ENCODE measurements at regions of chr5 and their contacts with region 1.

Region 1: DNA sequence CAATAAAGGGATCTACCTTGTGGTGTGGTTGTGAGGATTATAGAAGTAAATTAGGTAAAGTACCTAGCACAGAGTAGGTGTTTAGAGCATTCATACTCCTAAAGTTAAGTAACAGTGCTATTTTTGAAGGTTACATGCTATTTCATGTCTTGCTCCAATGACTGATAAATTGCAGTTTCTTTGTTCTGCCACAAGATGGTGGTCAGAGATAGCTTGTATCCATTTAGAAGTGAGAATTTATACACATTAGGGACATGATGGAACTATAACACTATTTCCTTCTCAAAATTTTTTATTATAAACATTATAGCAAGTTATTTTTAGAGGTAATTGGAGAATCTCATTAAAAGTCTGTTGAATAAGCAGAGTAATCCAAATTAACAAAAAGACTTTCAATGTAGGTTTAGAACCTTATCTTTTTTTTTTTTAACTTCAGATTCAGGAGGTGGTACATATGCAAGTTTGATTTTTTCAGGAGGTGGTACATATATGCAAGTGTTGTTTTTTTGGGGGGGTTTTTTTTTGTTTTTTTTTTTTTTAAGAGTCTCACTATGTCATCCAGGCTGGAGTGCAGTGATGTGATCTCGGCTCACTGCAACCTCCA is 17.1 kb downstream of the MTREX start:
- DNase-seq: peak in 6 of 9 donors; percentile 8 to 54 (median 36)
- ATAC-seq: peak; percentile 77
- H3K4me3 ChIP-seq: no peak overlapping the region
- H3K4me3 Mint-ChIP-seq: no peak overlapping the region
- H3K27ac ChIP-seq: no peak overlapping the region
- H3K27ac Mint-ChIP-seq: peak overlapping the region in 2 of 9 donors; percentile 4 to 34
- H3K4me1 ChIP-seq: peaks cover 0 to 3% of the 10 kb centered on the region in 2 donors
- H3K4me1 Mint-ChIP-seq: peaks cover 8 to 44% (median 35%) of the 10 kb centered on the region in 7 donors
- H3K27me3 ChIP-seq: no peaks in the 10 kb centered on the region
- H3K27me3 Mint-ChIP-seq: no peaks in the 10 kb centered on the region

Region 2: DNA sequence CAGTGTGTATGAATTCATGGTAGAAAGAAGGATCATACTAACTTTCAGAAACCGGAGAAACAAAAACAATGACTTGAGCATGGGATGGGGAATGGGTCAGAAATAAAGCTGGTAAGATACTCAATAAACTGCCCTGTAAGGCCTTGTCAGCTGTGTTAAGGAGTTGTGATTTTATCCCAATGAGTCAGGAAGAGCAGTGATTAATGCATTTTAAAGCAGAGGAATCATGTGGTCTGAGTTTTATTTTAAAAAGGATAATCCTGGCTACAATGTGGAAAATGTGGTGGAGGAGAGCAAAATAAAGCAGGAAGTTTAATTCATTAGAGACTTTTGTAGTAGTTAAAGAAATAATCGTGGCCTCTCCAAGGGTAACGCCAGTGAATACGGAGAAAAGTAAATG is 46.1 kb before region 1 on chr5:
- CTCF ChIA-PET with region 1: no interaction called
- POLR2A ChIA-PET with region 1: no interaction called
- intact Hi-C with region 1: no loop called
- DNase-seq: no peak
- ATAC-seq: no peak
- H3K4me3 ChIP-seq: no peak overlapping the region
- H3K4me3 Mint-ChIP-seq: no peak overlapping the region
- H3K27ac ChIP-seq: no peak overlapping the region
- H3K27ac Mint-ChIP-seq: no peak overlapping the region
- H3K4me1 ChIP-seq: no peaks in the 10 kb centered on the region
- H3K4me1 Mint-ChIP-seq: no peaks in the 10 kb centered on the region
- H3K27me3 ChIP-seq: no peaks in the 10 kb centered on the region
- H3K27me3 Mint-ChIP-seq: no peaks in the 10 kb centered on the region

Region 3: DNA sequence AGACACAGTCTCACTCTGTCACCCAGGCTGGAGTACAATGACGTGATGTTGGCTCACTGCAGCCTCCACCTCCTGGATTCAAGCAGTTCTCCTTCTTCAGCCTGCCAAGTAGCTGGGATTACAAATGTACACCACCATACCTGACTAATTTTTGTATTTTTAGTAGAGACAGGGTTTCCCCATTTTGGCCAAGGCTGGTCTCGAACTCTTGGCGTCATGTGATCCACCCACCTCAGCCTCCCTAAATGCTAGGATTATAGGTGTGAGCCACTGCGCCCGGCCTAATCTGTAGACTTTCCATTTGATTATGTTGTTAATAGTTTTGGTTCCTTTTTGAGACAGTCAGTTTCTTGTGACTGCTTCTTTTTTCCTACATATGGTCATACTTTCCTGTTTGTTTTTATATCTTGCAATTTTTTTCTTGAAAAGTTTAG is 13.9 kb after region 1 on chr5:
- CTCF ChIA-PET with region 1: no interaction called
- POLR2A ChIA-PET with region 1: no interaction called
- intact Hi-C with region 1: loop called in 1 of 2 experiments (anchors 2 kb)
- DNase-seq: peak in 1 of 9 donors; percentile 65
- ATAC-seq: no peak
- H3K4me3 ChIP-seq: no peak overlapping the region
- H3K4me3 Mint-ChIP-seq: peak overlapping the region in 1 of 10 donors; percentile 39
- H3K27ac ChIP-seq: no peak overlapping the region
- H3K27ac Mint-ChIP-seq: peak overlapping the region in 2 of 9 donors; percentile 52 to 66
- H3K4me1 ChIP-seq: no peaks in the 10 kb centered on the region
- H3K4me1 Mint-ChIP-seq: peaks cover 15 to 29% (median 20%) of the 10 kb centered on the region in 7 donors
- H3K27me3 ChIP-seq: no peaks in the 10 kb centered on the region
- H3K27me3 Mint-ChIP-seq: no peaks in the 10 kb centered on the region

Region 4: GRCh38 chr5:55936100-55936693 is 611.3 kb after region 1 on chr5:
- CTCF ChIA-PET with region 1: no interaction called
- POLR2A ChIA-PET with region 1: no interaction called
- intact Hi-C with region 1: loop called (anchors 10 kb)
- DNase-seq: peak; percentile 44 to 73 (median 66)
- ATAC-seq: peak; percentile 91
- H3K4me3 ChIP-seq: no peak overlapping the region
- H3K4me3 Mint-ChIP-seq: no peak overlapping the region
- H3K27ac ChIP-seq: no peak overlapping the region
- H3K27ac Mint-ChIP-seq: peak overlapping the region in 6 of 9 donors; percentile 11 to 84 (median 38)
- H3K4me1 ChIP-seq: no peaks in the 10 kb centered on the region
- H3K4me1 Mint-ChIP-seq: peaks cover 0 to 35% (median 14%) of the 10 kb centered on the region in 7 donors
- H3K27me3 ChIP-seq: no peaks in the 10 kb centered on the region
- H3K27me3 Mint-ChIP-seq: no peaks in the 10 kb centered on the region